Left cardiac atrium (tissue), 4 donors: ENCODE measurements at regions of chr15 and their contacts with region 1.

Region 1: GRCh38 chr15:98525661-98526001 is 122.7 kb upstream of the IGF1R start:
- DNase-seq: no peak
- ATAC-seq: peak; percentile 25 to 38

Region 2: GRCh38 chr15:98599909-98600691 is 74.5 kb after region 1 on chr15:
- intact Hi-C with region 1: no loop called
- DNase-seq: peak; percentile 37
- ATAC-seq: peak; percentile 67 to 93

Region 3: DNA sequence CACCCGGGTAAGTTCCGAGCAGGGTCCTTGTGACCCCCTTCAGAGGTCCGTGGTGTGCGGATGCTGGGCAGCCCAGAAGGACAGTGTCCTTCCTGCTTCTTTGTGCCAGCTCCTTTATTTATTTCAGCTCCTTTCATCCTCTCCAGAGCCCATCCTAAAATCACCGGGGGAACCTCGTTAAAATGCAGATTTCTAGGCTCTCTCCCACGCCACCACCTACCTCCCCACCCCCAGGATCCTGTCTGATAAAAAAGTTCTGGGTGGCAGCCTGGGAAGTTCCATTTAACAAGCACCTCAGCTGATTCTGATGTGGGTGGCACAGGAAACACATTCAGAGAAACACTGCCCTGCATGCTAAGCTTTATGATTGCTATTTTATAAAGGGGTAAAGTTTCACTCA is 110.2 kb after region 1 on chr15:
- intact Hi-C with region 1: loop called in 1 of 2 experiments (anchors 10 kb)
- DNase-seq: no peak
- ATAC-seq: no peak